Naive thymus-derived CD4-positive, alpha-beta T cell (primary cell): ENCODE measurements at regions of chr12 and their contacts with region 1.

Region 1: DNA sequence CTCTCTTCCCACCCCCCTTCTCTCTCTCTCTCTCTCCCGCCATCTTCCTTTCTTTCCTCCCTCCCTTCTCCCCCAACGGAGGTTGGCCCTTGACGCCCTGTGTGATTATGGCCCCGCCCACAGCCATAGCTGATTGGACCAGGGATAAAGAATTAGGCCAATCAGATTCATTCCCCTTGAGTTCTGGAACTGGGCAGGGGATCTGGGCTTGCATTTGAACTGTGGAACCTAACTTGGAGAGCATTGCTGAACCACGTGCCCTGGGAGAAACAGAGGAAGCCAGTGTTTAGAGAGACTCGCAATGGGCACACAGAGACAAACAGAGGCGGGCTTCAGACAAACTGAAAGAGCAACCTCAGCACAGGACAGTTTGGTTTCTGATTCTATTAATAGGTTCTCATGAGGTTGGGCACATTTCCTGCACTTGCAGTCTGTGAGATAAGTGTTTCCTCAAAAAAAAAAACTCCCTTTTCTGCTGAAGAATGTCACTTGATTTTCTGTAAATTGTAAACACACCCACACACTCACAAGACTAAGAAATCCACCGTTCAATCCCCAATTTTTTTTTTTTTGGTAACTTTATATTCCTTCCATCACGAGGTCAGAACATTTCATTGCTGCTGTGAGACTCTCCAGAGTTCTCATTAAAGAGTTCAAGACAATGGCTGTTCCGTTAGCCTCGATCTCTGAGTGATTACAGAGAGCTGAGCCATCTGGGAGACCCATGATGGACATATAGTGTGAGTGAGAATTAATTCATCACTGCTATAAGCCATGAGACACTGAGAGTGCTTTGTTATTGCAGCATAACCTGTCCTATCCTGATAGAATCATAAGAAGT is 3.5 kb upstream of the P2RX7 start:
- DNase-seq: peak; percentile 52 to 82 (median 81)
- ATAC-seq: peak; percentile 90
- H3K4me3 ChIP-seq: peak overlapping the region; percentile 64
- H3K4me3 Mint-ChIP-seq: peak overlapping the region; percentile 76 to 93 (median 82)
- H3K27ac ChIP-seq: peak overlapping the region; percentile 64
- H3K27ac Mint-ChIP-seq: peak overlapping the region; percentile 80 to 99 (median 94)
- H3K4me1 ChIP-seq: peaks cover 34 to 42% of the 10 kb centered on the region in 2 donors
- H3K4me1 Mint-ChIP-seq: peaks cover 48 to 88% (median 82%) of the 10 kb centered on the region in 7 donors
- H3K27me3 ChIP-seq: no peaks in the 10 kb centered on the region
- H3K27me3 Mint-ChIP-seq: no peaks in the 10 kb centered on the region

Region 2: DNA sequence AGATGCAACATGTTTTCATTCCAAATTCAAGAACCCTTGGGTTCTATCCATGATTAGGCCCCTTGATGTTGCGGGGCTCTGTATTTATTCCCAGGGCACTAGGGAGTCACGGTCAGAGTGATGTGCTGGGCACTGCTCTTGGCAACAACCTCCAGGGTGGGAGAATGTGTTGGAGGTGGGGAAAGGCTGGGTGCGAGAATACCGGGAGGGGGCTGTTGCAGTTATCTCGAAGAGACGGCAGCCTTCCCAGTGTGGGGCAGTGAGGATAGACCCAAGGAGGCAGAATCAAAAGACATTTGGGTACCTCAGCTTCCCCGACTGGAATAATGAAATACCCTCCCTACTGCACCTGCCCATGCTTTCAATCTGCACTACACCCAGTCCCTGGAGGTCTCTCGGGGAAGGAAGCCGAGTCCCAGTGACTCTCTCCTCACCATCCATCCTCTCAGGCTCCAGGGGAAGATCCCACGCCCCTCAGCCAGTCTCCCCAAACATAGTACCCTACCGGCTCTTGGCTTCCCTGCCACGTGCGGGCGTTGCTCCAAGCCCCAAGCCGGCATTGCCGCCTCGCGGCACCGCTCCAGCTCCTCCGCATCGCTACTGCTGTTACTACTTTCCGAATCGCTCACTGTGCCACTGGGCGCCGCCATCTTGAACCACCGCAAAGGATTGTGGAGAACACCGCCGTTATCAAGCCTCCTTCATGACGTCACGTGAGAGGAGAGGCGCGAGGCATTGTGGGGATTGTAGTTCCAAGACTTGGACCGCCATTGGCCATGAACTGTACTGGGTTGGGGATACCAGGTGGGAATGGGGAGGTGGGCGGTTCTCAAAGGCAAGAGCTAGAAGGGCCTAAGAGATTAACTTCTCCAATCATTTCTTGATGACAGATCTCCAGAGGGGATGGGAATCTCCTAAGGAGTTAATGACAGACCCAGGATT is 113.1 kb before region 1 on chr12 and contains the start of gene C12orf43:
- CTCF ChIA-PET with region 1: no interaction called
- POLR2A ChIA-PET with region 1: no interaction called
- intact Hi-C with region 1: loop called in 1 of 2 experiments (anchors 1 kb)
- DNase-seq: peak; percentile 74 to 93 (median 89)
- ATAC-seq: peak; percentile 99
- H3K4me3 ChIP-seq: peak within 1 kb of the TSS; percentile 88
- H3K4me3 Mint-ChIP-seq: peak within 1 kb of the TSS; percentile 93 to 99 (median 96)
- H3K27ac ChIP-seq: peak within 1 kb of the TSS; percentile 88
- H3K27ac Mint-ChIP-seq: peak within 1 kb of the TSS; percentile 89 to 97 (median 95)
- H3K4me1 ChIP-seq: peaks cover 6 to 11% of the 10 kb centered on the region in 2 donors
- H3K4me1 Mint-ChIP-seq: peaks cover 17 to 32% (median 24%) of the 10 kb centered on the region in 7 donors
- H3K27me3 ChIP-seq: no peaks in the 10 kb centered on the region
- H3K27me3 Mint-ChIP-seq: no peaks in the 10 kb centered on the region
- total RNA-seq, gene C12orf43: 11.8 to 24.2 (median 17.5) TPM

Region 3: GRCh38 chr12:121095544-121096198 is 33.5 kb before region 1 on chr12:
- CTCF ChIA-PET with region 1: interaction called, 3 read pairs
- POLR2A ChIA-PET with region 1: interaction called, 4 read pairs
- intact Hi-C with region 1: loop called in 1 of 2 experiments (anchors 2 kb)
- DNase-seq: peak; percentile 60 to 81 (median 70)
- ATAC-seq: peak; percentile 91
- H3K4me3 ChIP-seq: peak overlapping the region; percentile 66
- H3K4me3 Mint-ChIP-seq: peak overlapping the region; percentile 81 to 95 (median 87)
- H3K27ac ChIP-seq: no peak overlapping the region
- H3K27ac Mint-ChIP-seq: peak overlapping the region in 6 of 9 donors; percentile 41 to 88 (median 69)
- H3K4me1 ChIP-seq: peaks cover 34 to 42% of the 10 kb centered on the region in 2 donors
- H3K4me1 Mint-ChIP-seq: peaks cover 28 to 56% (median 52%) of the 10 kb centered on the region in 7 donors
- H3K27me3 ChIP-seq: no peaks in the 10 kb centered on the region
- H3K27me3 Mint-ChIP-seq: peaks cover 0 to 22% (median 4%) of the 10 kb centered on the region in 5 donors

Region 4: DNA sequence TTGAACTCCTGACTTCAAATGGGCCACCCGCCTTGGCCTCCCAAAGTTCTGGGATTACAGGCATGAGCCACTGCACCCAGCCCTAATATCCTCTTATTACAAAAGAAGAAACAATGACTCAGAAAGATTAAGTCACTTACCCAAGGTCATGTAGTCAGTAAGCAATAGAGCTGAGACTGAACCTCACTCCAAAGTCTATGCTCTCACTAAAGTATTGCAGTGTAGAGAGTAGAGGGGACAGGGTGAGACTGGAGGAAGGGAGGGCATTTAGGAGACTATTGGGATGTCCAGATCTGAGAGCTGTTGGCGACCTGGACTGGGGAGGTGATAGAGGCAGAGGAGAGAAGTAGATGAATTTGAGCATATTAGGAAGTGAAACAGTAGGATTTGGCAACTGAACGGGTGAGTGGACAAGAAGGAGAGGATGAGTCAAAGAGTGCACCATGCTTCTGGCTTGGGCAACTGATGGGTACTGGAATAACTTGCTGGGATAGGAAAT is 15.3 kb after region 1 on chr12:
- CTCF ChIA-PET with region 1: no interaction called
- POLR2A ChIA-PET with region 1: no interaction called
- intact Hi-C with region 1: loop called (anchors 1 to 2 kb)
- DNase-seq: peak in 1 of 9 donors; percentile 10
- ATAC-seq: peak; percentile 72
- H3K4me3 ChIP-seq: no peak overlapping the region
- H3K4me3 Mint-ChIP-seq: peak overlapping the region in 2 of 10 donors; percentile 47 to 60
- H3K27ac ChIP-seq: no peak overlapping the region
- H3K27ac Mint-ChIP-seq: peak overlapping the region in 6 of 9 donors; percentile 1 to 87 (median 30)
- H3K4me1 ChIP-seq: no peaks in the 10 kb centered on the region
- H3K4me1 Mint-ChIP-seq: peaks cover 14 to 30% (median 19%) of the 10 kb centered on the region in 7 donors
- H3K27me3 ChIP-seq: no peaks in the 10 kb centered on the region
- H3K27me3 Mint-ChIP-seq: no peaks in the 10 kb centered on the region

Region 5: GRCh38 chr12:121184425-121184824 is 55.2 kb after region 1 on chr12:
- CTCF ChIA-PET with region 1: no interaction called
- POLR2A ChIA-PET with region 1: no interaction called
- intact Hi-C with region 1: no loop called
- DNase-seq: no peak
- ATAC-seq: no peak
- H3K4me3 ChIP-seq: no peak overlapping the region
- H3K4me3 Mint-ChIP-seq: no peak overlapping the region
- H3K27ac ChIP-seq: no peak overlapping the region
- H3K27ac Mint-ChIP-seq: no peak overlapping the region
- H3K4me1 ChIP-seq: no peaks in the 10 kb centered on the region
- H3K4me1 Mint-ChIP-seq: peaks cover 0 to 6% (median 0%) of the 10 kb centered on the region in 7 donors
- H3K27me3 ChIP-seq: no peaks in the 10 kb centered on the region
- H3K27me3 Mint-ChIP-seq: no peaks in the 10 kb centered on the region

Region 6: GRCh38 chr12:121223292-121224285 is 94.4 kb after region 1 on chr12:
- CTCF ChIA-PET with region 1: no interaction called
- POLR2A ChIA-PET with region 1: no interaction called
- intact Hi-C with region 1: loop called (anchors 1 kb)
- DNase-seq: peak in 8 of 9 donors; percentile 21 to 56 (median 48)
- ATAC-seq: peak; percentile 68
- H3K4me3 ChIP-seq: peak overlapping the region; percentile 28
- H3K4me3 Mint-ChIP-seq: peak overlapping the region; percentile 48 to 91 (median 72)
- H3K27ac ChIP-seq: peak overlapping the region; percentile 56
- H3K27ac Mint-ChIP-seq: peak overlapping the region; percentile 92 to 98 (median 95)
- H3K4me1 ChIP-seq: peaks cover 16 to 48% of the 10 kb centered on the region in 2 donors
- H3K4me1 Mint-ChIP-seq: peaks cover 23 to 57% (median 49%) of the 10 kb centered on the region in 7 donors
- H3K27me3 ChIP-seq: no peaks in the 10 kb centered on the region
- H3K27me3 Mint-ChIP-seq: no peaks in the 10 kb centered on the region

Region 7: DNA sequence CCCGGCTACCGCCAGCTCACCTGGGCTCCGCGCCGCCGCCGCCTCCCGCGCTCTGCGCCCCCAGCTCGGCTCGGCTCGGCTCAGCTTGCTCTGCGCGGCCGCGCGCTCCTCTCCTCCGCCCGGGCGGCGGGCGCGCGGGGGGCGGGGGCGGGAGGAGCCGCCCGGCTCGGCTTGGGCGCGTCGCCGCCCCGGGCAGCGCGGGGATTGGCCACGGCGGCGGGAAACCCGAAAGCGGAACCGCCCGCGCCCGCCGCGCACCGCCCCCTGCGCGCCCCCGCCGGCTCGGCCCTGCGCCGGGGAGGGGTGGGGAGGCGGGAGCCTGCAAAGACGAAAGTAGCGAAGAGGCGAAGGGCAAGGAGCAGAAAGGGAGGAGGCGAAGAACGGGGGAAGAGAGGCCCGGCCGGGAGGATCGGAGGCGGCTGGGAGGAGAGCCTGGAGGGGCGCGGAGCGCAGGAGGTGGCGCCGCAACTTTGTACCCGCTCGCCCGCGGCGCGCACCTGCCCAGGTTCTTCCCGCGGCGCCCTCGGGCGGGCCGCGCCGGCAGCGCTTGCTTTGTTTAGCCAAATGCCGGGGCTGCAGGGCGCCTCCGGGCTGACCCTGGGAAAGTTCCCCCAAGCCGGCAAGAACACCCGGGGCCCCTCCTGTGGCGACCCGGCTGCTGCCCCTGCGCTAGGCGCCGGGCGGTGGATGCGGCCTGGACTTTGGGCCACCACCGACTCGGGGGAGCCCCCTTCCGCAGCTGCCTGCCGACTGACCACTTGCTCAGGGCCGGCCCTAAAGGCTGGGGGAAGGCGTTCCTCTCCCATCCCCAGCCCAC is 167.6 kb after region 1 on chr12 and contains the start of gene CAMKK2:
- CTCF ChIA-PET with region 1: no interaction called
- POLR2A ChIA-PET with region 1: no interaction called
- intact Hi-C with region 1: loop called in 1 of 2 experiments (anchors 1 kb)
- DNase-seq: peak; percentile 84 to 95 (median 92)
- ATAC-seq: peak; percentile 94
- H3K4me3 ChIP-seq: peak within 1 kb of the TSS; percentile 87
- H3K4me3 Mint-ChIP-seq: peak within 1 kb of the TSS; percentile 86 to 93 (median 89)
- H3K27ac ChIP-seq: peak within 1 kb of the TSS; percentile 80
- H3K27ac Mint-ChIP-seq: peak within 1 kb of the TSS; percentile 55 to 91 (median 81)
- H3K4me1 ChIP-seq: peaks cover 12 to 14% of the 10 kb centered on the region in 2 donors
- H3K4me1 Mint-ChIP-seq: peaks cover 0 to 43% (median 19%) of the 10 kb centered on the region in 7 donors
- H3K27me3 ChIP-seq: no peaks in the 10 kb centered on the region
- H3K27me3 Mint-ChIP-seq: peaks cover 0 to 4% (median 0%) of the 10 kb centered on the region in 5 donors
- total RNA-seq, gene CAMKK2: 15.5 to 38.7 (median 18.1) TPM